Aorta (tissue), 5 donors: ENCODE measurements at regions of chr12 and their contacts with region 1.

Region 1: GRCh38 chr12:121793838-121794533 is 498 bp upstream of the RHOF start:
- DNase-seq: peak; percentile 95 to 97
- ATAC-seq: peak; percentile 90
- H3K4me3 ChIP-seq: peak overlapping the region in 1 of 2 donors; percentile 15
- H3K27ac ChIP-seq: no peak overlapping the region
- H3K4me1 ChIP-seq: no peaks in the 10 kb centered on the region
- H3K27me3 ChIP-seq: no peaks in the 10 kb centered on the region

Region 2: DNA sequence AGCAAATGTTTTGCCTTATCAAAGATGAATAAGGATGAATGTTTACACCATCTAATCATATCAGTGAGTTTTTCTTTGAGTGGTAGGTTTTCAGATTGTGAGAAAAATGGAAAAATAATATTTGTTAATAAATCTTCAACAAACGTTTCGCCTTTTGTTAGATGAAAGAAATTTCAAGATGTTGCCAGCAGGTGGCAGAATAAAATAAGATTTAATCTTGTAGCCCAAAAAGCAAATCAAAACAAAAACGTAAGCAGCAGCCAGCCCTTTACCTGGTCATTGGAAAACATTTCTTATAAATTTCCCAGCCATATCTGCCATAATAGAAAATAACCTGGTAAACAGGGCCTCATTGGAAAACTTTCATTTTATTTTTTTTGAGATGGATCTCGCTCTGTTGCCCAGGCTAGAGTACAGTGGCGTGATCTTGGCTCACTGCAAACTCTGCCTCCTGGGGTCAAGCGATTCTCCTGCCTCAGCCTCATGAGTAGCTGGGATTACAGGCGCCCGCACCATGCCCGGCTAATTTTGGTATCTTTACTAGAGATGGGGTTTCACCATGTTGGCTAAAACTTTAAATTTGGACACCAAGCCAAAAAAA is 96.8 kb before region 1 on chr12:
- intact Hi-C with region 1: loop called (anchors 1 to 2 kb)
- DNase-seq: no peak
- ATAC-seq: no peak
- H3K4me3 ChIP-seq: no peak overlapping the region
- H3K27ac ChIP-seq: no peak overlapping the region
- H3K4me1 ChIP-seq: peaks cover 0 to 2% of the 10 kb centered on the region in 2 donors
- H3K27me3 ChIP-seq: no peaks in the 10 kb centered on the region

Region 3: GRCh38 chr12:121773011-121773777 is 20.8 kb before region 1 on chr12:
- intact Hi-C with region 1: loop called in 1 of 2 experiments (anchors 2 kb)
- DNase-seq: peak; percentile 79 to 90
- ATAC-seq: peak; percentile 73
- H3K4me3 ChIP-seq: no peak overlapping the region
- H3K27ac ChIP-seq: no peak overlapping the region
- H3K4me1 ChIP-seq: no peaks in the 10 kb centered on the region
- H3K27me3 ChIP-seq: no peaks in the 10 kb centered on the region

Region 4: GRCh38 chr12:121811434-121812319 is 17.7 kb after region 1 on chr12:
- intact Hi-C with region 1: loop called (anchors 1 to 2 kb)
- DNase-seq: peak; percentile 79 to 92
- ATAC-seq: peak; percentile 94
- H3K4me3 ChIP-seq: peak overlapping the region; percentile 47 to 67
- H3K27ac ChIP-seq: peak overlapping the region in 1 of 2 donors; percentile 34
- H3K4me1 ChIP-seq: no peaks in the 10 kb centered on the region
- H3K27me3 ChIP-seq: no peaks in the 10 kb centered on the region

Region 5: DNA sequence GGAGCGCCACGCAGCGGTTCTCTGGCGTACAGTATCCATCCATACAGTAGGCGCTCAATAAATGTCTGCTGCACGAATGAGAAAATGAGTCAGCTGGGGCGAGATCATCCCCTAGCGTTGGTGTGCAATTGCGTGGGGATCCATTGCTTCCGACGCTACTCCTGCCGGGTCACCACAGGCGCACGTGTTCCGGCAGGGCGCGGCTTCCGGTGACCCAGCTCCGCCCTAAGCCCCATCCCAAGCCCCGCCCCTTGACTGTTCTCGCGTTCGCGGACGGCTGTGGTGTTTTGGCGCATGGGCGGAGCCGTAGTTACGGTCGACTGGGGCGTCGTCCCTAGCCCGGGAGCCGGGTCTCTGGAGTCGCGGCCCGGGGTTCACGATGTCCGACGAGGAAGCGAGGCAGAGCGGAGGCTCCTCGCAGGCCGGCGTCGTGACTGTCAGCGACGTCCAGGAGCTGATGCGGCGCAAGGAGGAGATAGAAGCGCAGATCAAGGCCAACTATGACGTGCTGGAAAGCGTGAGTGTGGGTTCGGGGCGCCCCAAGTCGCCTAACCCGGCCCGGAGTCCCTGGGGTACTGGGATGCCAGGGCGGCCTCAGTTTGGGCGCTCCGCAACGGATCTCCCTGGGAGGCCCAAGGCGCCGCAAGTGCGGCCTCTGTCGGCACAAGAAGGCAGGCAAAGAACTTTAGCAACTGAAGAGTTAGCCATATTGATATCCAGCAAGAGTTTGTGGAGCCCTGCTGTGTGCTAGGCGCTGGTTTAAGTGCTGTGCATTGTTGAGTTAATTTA is 94.7 kb after region 1 on chr12 and contains the start of gene PSMD9:
- intact Hi-C with region 1: loop called (anchors 2 kb)
- DNase-seq: peak; percentile 99
- ATAC-seq: peak; percentile 100
- H3K4me3 ChIP-seq: peak within 1 kb of the TSS; percentile 36 to 79
- H3K27ac ChIP-seq: peak within 1 kb of the TSS; percentile 33 to 96
- H3K4me1 ChIP-seq: peaks cover 0 to 4% of the 10 kb centered on the region in 2 donors
- H3K27me3 ChIP-seq: no peaks in the 10 kb centered on the region
- total RNA-seq, gene PSMD9: 37.2 to 42.3 TPM